A673 (cell line): ENCODE measurements at regions of chr10 and their contacts with region 1.

Region 1: GRCh38 chr10:62443866-62444265 is 69.7 kb downstream of the ZNF365 start:
- DNase-seq: peak; percentile 99
- H3K4me3 ChIP-seq: no peak overlapping the region
- H3K27ac ChIP-seq: peak overlapping the region; percentile 78
- H3K4me1 ChIP-seq: peaks cover 37% of the 10 kb centered on the region
- H3K27me3 ChIP-seq: no peaks in the 10 kb centered on the region
- CTCF ChIP-seq: no peak

Region 2: DNA sequence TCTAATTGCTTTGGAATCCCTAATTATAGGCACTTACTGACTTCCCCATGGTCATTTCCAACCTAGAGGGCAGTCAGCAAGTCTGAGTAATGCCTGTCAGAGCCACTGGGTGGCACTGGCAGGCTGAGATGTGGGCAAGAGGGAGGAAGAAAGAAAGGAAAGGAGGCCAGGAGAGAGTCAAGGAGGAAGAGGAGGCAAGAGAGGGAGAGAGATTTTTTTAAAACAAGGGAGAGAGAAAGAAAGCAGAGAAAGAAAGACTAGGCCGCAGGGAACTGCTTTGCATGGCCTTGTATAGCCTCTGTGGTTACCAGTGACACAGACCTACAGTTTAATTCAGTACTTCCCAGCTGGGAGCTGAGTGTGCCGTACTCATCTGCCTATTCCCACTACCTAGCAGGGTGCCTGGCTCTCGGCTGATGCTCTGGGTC is 150.2 kb after region 1 on chr10:
- CTCF ChIA-PET with region 1: no interaction called
- POLR2A ChIA-PET with region 1: no interaction called
- intact Hi-C with region 1: loop called (anchors 5 kb)
- DNase-seq: peak; percentile 81
- H3K4me3 ChIP-seq: no peak overlapping the region
- H3K27ac ChIP-seq: no peak overlapping the region
- H3K4me1 ChIP-seq: peaks cover 6% of the 10 kb centered on the region
- H3K27me3 ChIP-seq: no peaks in the 10 kb centered on the region
- CTCF ChIP-seq: peak; percentile 97

Region 3: DNA sequence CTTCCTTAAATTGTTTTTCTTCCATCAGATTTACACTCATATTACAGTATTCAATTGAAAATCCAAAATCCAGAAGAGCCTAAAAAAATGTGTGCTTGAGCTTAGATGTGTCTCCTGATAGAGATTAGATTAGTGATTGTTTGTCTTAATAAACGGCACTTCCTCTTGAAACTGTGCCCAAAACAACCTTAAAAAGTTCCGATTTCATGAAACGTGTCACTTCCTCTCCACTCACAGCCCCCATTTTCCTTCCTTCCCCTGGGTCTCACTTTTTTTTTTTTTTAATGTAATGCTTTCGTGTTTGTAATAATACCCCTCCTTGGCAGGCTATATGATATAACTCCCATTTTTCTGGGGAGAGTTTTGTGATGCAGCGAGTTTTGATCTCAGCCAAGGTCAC is 245.8 kb after region 1 on chr10:
- CTCF ChIA-PET with region 1: no interaction called
- POLR2A ChIA-PET with region 1: no interaction called
- intact Hi-C with region 1: loop called (anchors 2 kb)
- DNase-seq: peak; percentile 81
- H3K4me3 ChIP-seq: no peak overlapping the region
- H3K27ac ChIP-seq: peak overlapping the region; percentile 94
- H3K4me1 ChIP-seq: peaks cover 51% of the 10 kb centered on the region
- H3K27me3 ChIP-seq: no peaks in the 10 kb centered on the region
- CTCF ChIP-seq: no peak

Region 4: GRCh38 chr10:63083904-63084689 is 640.2 kb after region 1 on chr10:
- CTCF ChIA-PET with region 1: no interaction called
- POLR2A ChIA-PET with region 1: no interaction called
- intact Hi-C with region 1: loop called (anchors 5 kb)
- DNase-seq: peak; percentile 90
- H3K4me3 ChIP-seq: no peak overlapping the region
- H3K27ac ChIP-seq: no peak overlapping the region
- H3K4me1 ChIP-seq: peaks cover 7% of the 10 kb centered on the region
- H3K27me3 ChIP-seq: no peaks in the 10 kb centered on the region
- CTCF ChIP-seq: peak; percentile 82